ENCODE measurements at regions of chr10 and their contacts with region 1.

Region 1: GRCh38 chr10:110918643-110919363 is at the start of gene BBIP1:
- DNase-seq: peak in 6 of 14 experiments; percentile 69 to 100 (median 95)
- ATAC-seq: peak; percentile 94
- H3K4me3 ChIP-seq: peak within 1 kb of the TSS; percentile 97
- H3K4me3 Mint-ChIP-seq: peak within 1 kb of the TSS; percentile 99
- H3K27ac ChIP-seq: peak within 1 kb of the TSS; percentile 98 to 100
- H3K27ac Mint-ChIP-seq: peak within 1 kb of the TSS; percentile 99
- H3K4me1 ChIP-seq: peaks cover 8% of the 10 kb centered on the region
- H3K4me1 Mint-ChIP-seq: peaks cover 62% of the 10 kb centered on the region
- H3K27me3 ChIP-seq: no peaks in the 10 kb centered on the region
- H3K27me3 Mint-ChIP-seq: no peaks in the 10 kb centered on the region
- CTCF ChIP-seq: no peak
- total RNA-seq, gene BBIP1: 17.1 to 21.9 TPM

Region 2: GRCh38 chr10:110210674-110211464 is 707.9 kb before region 1 on chr10:
- CTCF ChIA-PET with region 1: no interaction called
- POLR2A ChIA-PET with region 1: interaction called, 10 read pairs
- intact Hi-C with region 1: loop called in 1 of 2 experiments (anchors 10 kb)
- DNase-seq: peak; percentile 84 to 96 (median 87)
- ATAC-seq: peak; percentile 41
- H3K4me3 ChIP-seq: peak overlapping the region; percentile 94
- H3K4me3 Mint-ChIP-seq: peak overlapping the region; percentile 99
- H3K27ac ChIP-seq: peak overlapping the region; percentile 85 to 98
- H3K27ac Mint-ChIP-seq: peak overlapping the region; percentile 100
- H3K4me1 ChIP-seq: peaks cover 76% of the 10 kb centered on the region
- H3K4me1 Mint-ChIP-seq: peaks cover 58% of the 10 kb centered on the region
- H3K27me3 ChIP-seq: no peaks in the 10 kb centered on the region
- H3K27me3 Mint-ChIP-seq: peaks cover 5% of the 10 kb centered on the region
- CTCF ChIP-seq: no peak

Region 3: DNA sequence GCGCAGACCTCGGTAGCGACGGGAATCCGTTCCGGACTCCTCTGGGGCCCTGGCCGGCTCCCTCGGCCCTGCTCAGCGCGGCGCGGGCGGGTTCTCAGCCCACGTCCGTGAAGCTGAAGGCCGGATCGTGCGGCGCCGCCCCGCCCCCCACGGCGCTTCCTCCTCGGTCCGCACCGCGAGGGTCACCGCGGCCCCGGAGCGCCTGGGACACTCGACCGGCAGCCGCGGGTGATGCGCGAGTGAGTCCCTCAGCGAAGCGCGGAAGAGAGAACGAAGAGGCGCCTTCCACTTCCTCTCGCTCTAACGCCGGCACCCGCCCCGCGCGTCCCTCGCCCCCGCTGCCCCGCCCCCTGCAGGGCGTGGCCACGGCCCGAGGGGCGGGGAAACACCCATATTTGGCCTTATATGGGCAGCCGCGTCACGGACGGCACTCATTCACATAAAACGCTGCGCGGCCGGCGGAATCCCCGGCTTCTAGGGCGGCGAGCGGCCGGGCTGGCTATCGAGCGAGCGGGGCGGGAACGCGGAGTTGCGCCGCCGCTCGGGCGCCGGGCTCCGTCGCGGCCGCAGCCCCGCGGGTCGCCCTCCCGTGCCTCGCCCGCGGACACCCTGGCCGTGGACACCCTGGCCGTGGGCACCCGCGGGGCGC is 421.2 kb before region 1 on chr10 and contains the start of gene DUSP5:
- CTCF ChIA-PET with region 1: no interaction called
- POLR2A ChIA-PET with region 1: no interaction called
- intact Hi-C with region 1: loop called in 1 of 2 experiments (anchors 5 kb)
- DNase-seq: peak; percentile 89 to 98 (median 95)
- ATAC-seq: peak; percentile 83
- H3K4me3 ChIP-seq: peak within 1 kb of the TSS; percentile 80
- H3K4me3 Mint-ChIP-seq: peak within 1 kb of the TSS; percentile 96
- H3K27ac ChIP-seq: peak within 1 kb of the TSS; percentile 53 to 64
- H3K27ac Mint-ChIP-seq: peak within 1 kb of the TSS; percentile 84
- H3K4me1 ChIP-seq: peaks cover 62% of the 10 kb centered on the region
- H3K4me1 Mint-ChIP-seq: peaks cover 63% of the 10 kb centered on the region
- H3K27me3 ChIP-seq: no peaks in the 10 kb centered on the region
- H3K27me3 Mint-ChIP-seq: no peaks in the 10 kb centered on the region
- CTCF ChIP-seq: no peak
- total RNA-seq, gene DUSP5: 64.3 to 66.2 TPM

Region 4: DNA sequence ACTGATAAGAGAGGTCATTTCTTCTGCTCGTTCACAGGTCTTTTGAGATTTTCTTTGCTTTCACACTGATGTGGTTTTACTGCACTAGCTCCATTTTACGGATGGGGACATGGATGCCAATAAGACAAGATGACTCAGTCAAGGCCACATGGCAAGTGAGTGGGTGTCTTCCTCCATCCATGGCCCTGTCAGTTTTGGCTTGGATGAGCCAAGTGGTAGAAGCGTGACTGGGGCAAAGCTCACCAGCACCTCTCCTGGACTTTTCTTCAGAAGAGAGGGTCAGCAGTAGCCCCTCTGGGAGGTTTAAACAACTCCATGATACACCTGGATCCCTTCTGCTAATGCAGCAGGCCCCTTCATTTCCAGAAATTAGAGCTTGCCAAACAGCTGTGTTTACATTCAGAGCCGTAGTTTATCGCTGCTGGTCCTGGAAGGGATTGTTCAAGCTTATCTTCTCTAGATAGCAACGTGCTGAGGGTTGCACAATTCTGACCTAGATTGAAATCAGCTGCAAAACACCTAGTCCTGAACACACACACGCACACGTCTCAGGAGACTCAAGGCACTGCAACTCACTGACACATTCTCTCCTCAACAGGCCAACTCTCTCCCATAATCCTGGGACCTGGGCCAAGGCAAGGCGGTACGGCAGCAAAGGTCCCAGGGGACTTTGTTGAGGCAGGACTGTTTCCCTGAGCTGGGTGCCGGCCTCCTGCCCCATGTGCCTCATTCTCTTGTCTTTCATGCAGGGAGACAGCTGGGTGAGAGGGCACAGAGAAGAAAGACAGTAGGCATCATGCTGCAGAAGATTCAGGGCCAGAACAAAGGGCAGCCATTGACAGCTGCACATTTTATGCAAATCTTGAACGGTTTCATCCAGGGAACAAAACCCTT is 61.3 kb before region 1 on chr10:
- CTCF ChIA-PET with region 1: no interaction called
- POLR2A ChIA-PET with region 1: interaction called, 14 read pairs
- intact Hi-C with region 1: no loop called
- DNase-seq: peak in 5 of 14 experiments; percentile 32 to 74 (median 58)
- ATAC-seq: peak; percentile 43
- H3K4me3 ChIP-seq: no peak overlapping the region
- H3K4me3 Mint-ChIP-seq: peak overlapping the region; percentile 49
- H3K27ac ChIP-seq: peak overlapping the region; percentile 77 to 88
- H3K27ac Mint-ChIP-seq: peak overlapping the region; percentile 96
- H3K4me1 ChIP-seq: peaks cover 80% of the 10 kb centered on the region
- H3K4me1 Mint-ChIP-seq: peaks cover 89% of the 10 kb centered on the region
- H3K27me3 ChIP-seq: no peaks in the 10 kb centered on the region
- H3K27me3 Mint-ChIP-seq: no peaks in the 10 kb centered on the region
- CTCF ChIP-seq: no peak

Region 5: DNA sequence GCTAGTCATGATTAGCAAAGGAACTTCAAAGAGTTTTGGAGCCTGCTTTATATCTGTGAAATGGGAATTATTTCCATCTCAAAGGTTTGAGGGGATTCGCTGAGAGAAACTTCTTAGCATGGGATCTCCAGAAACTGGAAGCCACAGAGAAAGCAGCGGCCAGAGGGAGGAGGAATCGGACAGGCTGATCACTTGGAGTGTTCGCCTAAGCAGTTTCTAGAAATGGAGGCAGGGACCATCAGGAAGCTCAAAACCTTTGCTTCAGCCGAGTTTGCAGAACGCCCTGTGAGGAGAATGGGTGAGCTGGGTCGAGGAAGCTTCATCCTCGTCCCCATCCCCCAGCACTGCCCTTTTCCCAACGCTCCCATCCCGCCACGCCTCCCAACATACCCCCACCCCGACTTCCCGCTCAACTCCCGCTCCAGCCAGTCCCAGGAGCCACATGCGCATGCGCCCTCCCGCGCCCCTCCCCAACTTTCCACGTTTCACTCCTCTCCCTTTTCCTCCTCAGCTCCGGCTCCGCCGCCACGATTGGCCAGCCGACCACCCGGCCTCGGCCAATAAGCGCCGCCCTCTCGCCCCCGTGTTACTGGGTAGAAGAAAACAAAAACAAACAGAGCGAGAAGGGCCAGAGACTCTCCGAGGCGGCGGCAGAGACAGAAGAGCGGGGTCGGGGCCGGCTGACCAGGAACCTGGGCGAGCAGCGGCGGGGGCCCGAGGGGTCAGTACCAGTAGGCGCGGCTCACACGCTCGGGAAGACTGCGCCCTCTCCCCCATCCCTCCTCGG is 47.3 kb before region 1 on chr10 and contains the start of gene PDCD4:
- CTCF ChIA-PET with region 1: no interaction called
- POLR2A ChIA-PET with region 1: interaction called, 19 read pairs
- intact Hi-C with region 1: loop called (anchors 2 to 5 kb)
- DNase-seq: peak; percentile 87 to 96 (median 90)
- ATAC-seq: peak; percentile 56
- H3K4me3 ChIP-seq: peak within 1 kb of the TSS; percentile 86
- H3K4me3 Mint-ChIP-seq: peak within 1 kb of the TSS; percentile 99
- H3K27ac ChIP-seq: peak within 1 kb of the TSS; percentile 93 to 99
- H3K27ac Mint-ChIP-seq: peak within 1 kb of the TSS; percentile 96
- H3K4me1 ChIP-seq: peaks cover 54% of the 10 kb centered on the region
- H3K4me1 Mint-ChIP-seq: peaks cover 85% of the 10 kb centered on the region
- H3K27me3 ChIP-seq: no peaks in the 10 kb centered on the region
- H3K27me3 Mint-ChIP-seq: no peaks in the 10 kb centered on the region
- CTCF ChIP-seq: no peak
- total RNA-seq, gene PDCD4: 352 to 358 TPM

Region 6: DNA sequence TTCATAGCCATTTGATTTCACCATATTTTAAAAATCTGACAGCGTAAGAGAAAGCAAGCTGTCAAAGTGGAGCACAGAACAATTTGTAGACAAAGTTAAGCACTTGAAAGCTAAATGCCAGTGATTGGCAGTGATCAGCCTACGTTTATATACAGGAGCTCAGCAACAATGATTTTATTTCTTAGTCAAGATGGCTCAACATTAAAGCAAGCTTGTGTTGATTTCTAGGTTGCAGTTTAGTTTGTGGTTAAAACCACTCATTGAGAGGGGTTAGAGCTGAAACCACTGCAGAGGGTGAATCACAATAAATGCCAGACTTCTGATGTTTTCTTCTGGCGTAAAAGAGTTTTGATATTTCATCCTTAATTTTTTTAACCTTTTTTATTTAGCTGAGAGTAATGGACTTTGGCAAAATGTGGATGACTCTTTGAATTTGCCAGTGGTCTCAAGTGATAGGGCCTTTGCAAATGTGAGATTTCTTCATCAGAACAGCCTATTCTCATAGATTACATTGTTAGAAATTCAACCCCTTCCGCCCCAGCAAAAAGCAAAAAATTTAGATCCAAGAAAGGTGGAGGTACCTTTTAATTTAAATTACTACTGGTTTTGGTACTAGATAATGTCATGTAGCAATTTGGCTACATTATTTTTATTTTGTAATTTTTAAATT is 74.4 kb after region 1 on chr10:
- CTCF ChIA-PET with region 1: interaction called, 3 read pairs
- POLR2A ChIA-PET with region 1: interaction called, 4 read pairs
- intact Hi-C with region 1: loop called in 1 of 2 experiments (anchors 2 kb)
- DNase-seq: peak in 6 of 14 experiments; percentile 3 to 67 (median 38)
- ATAC-seq: peak; percentile 96
- H3K4me3 ChIP-seq: no peak overlapping the region
- H3K4me3 Mint-ChIP-seq: peak overlapping the region; percentile 55
- H3K27ac ChIP-seq: no peak overlapping the region
- H3K27ac Mint-ChIP-seq: peak overlapping the region; percentile 65
- H3K4me1 ChIP-seq: peaks cover 6% of the 10 kb centered on the region
- H3K4me1 Mint-ChIP-seq: peaks cover 61% of the 10 kb centered on the region
- H3K27me3 ChIP-seq: no peaks in the 10 kb centered on the region
- H3K27me3 Mint-ChIP-seq: no peaks in the 10 kb centered on the region
- CTCF ChIP-seq: no peak

Region 7: GRCh38 chr10:111063471-111063870 is 144.7 kb after region 1 on chr10:
- CTCF ChIA-PET with region 1: no interaction called
- POLR2A ChIA-PET with region 1: no interaction called
- intact Hi-C with region 1: no loop called
- DNase-seq: no peak
- ATAC-seq: no peak
- H3K4me3 ChIP-seq: no peak overlapping the region
- H3K4me3 Mint-ChIP-seq: no peak overlapping the region
- H3K27ac ChIP-seq: no peak overlapping the region
- H3K27ac Mint-ChIP-seq: no peak overlapping the region
- H3K4me1 ChIP-seq: no peaks in the 10 kb centered on the region
- H3K4me1 Mint-ChIP-seq: no peaks in the 10 kb centered on the region
- H3K27me3 ChIP-seq: peaks cover 12 to 20% of the 10 kb centered on the region in 2 experiments
- H3K27me3 Mint-ChIP-seq: peaks cover 62% of the 10 kb centered on the region
- CTCF ChIP-seq: no peak